H1 (cell line): ENCODE measurements at regions of chr3 and their contacts with region 1.

Region 1: DNA sequence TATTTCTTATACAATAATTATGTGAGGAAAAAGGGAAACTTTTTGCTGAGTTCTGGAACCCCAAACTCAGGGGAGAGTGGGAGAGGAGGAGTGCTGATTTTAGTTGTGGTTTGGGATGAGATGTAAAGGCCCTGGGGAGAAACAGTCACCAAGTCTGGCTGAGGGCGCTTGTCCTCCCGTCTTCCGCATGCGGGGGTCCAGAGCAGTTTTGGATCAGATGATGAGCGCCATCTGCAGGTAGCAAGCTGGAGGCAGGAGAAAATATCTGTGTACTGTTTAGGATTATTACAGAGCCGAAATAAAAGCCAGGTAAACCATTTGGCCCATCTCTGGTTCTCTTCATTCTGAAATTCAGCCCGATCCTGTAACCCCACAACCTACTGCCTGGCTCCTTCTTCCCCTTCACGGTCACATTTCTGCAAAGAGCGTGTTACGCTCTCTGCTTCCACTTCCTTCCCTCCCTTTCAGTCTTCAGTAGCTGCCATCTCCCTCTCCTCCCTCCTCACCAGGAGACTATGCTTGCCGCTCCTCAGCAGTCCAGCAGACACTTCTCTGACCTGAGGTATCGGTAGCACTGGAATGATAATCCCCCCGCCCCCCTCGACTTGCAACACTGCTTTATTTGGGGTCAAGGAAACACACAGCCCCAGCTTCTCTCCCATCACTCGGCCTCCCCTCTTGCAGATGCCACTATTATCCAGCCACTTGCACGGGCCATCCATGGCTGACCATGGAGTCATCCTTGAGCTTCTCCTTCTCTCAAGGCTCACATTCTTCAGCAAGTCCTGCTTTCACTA is 1.4 kb upstream of the PARP14 start:
- DNase-seq: peak; percentile 25 to 82
- H3K4me3 ChIP-seq: peak overlapping the region in 1 of 4 experiments; percentile 87; a peak in 2 of 8 replicates
- H3K27ac ChIP-seq: no peak overlapping the region
- H3K4me1 ChIP-seq: peaks cover 6 to 12% (median 9%) of the 10 kb centered on the region in 4 experiments; a peak in 6 of 7 replicates
- H3K27me3 ChIP-seq: no peaks in the 10 kb centered on the region; a peak in 2 of 7 replicates
- CTCF ChIP-seq: peak; percentile 68 to 90 (median 84)
- EP300 ChIP-seq: no peak
- POLR2A ChIP-seq: no peak
- RAD21 ChIP-seq: peak; percentile 90 to 93

Region 2: DNA sequence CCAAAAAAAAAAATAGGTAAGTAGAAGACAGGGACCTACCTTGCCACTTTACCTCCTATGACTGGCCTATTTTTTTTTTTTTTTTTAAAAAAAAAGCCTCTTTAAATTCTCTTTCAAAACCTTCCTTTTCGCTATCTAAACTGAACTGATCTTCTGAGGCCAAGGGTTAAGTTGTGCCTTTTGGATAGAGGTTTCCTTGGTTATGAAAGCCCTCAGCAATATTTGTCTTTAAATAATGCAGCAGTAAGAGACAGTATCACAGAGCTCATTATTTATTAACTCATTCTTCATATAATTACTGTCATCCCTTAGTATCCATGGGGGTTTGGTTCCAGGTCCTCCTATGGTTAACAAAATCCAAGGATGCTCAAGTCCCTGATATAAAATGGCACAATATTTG is 305.2 kb before region 1 on chr3:
- CTCF ChIA-PET with region 1: no interaction called
- POLR2A ChIA-PET with region 1: no interaction called
- DNase-seq: no peak
- H3K4me3 ChIP-seq: no peak overlapping the region
- H3K27ac ChIP-seq: no peak overlapping the region
- H3K4me1 ChIP-seq: no peaks in the 10 kb centered on the region
- H3K27me3 ChIP-seq: no peaks in the 10 kb centered on the region
- CTCF ChIP-seq: no peak
- EP300 ChIP-seq: no peak
- POLR2A ChIP-seq: no peak
- RAD21 ChIP-seq: no peak

Region 3: DNA sequence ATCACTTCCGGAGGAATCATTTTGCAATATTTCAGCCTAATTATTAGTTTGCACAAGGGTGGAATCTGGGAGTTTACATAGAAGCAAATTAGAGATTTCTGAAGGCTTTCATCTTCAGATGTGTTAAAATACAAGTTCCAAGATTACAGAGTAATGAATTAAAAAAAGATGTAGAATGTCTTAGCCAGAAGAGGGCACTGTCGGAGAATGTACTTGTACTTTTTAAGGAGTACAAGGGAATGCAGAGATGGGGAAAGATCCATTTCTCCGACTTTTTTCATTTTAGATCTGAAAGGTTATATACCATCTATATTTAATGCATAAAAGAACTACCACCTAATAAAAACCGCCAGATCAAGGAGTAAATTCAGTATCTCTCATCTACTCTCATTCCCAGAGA is 220.3 kb before region 1 on chr3:
- CTCF ChIA-PET with region 1: interaction called, 18 read pairs
- POLR2A ChIA-PET with region 1: no interaction called
- DNase-seq: no peak
- H3K4me3 ChIP-seq: no peak overlapping the region
- H3K27ac ChIP-seq: no peak overlapping the region
- H3K4me1 ChIP-seq: no peaks in the 10 kb centered on the region
- H3K27me3 ChIP-seq: no peaks in the 10 kb centered on the region
- CTCF ChIP-seq: peak in 2 of 3 experiments; percentile 8 to 33; a peak in 2 of 4 replicates
- EP300 ChIP-seq: no peak
- POLR2A ChIP-seq: no peak
- RAD21 ChIP-seq: peak; percentile 58 to 61

Region 4: GRCh38 chr3:122619040-122619439 is 60.2 kb before region 1 on chr3:
- CTCF ChIA-PET with region 1: interaction called, 12 read pairs
- POLR2A ChIA-PET with region 1: no interaction called
- DNase-seq: no peak
- H3K4me3 ChIP-seq: no peak overlapping the region
- H3K27ac ChIP-seq: no peak overlapping the region
- H3K4me1 ChIP-seq: peaks cover 0 to 5% (median 3%) of the 10 kb centered on the region in 4 experiments; a peak in 2 of 7 replicates
- H3K27me3 ChIP-seq: no peaks in the 10 kb centered on the region
- CTCF ChIP-seq: no peak
- EP300 ChIP-seq: no peak
- POLR2A ChIP-seq: no peak
- RAD21 ChIP-seq: no peak

Region 5: GRCh38 chr3:122661633-122662032 is 17.6 kb before region 1 on chr3:
- CTCF ChIA-PET with region 1: interaction called, 16 read pairs
- POLR2A ChIA-PET with region 1: no interaction called
- DNase-seq: no peak
- H3K4me3 ChIP-seq: no peak overlapping the region
- H3K27ac ChIP-seq: no peak overlapping the region
- H3K4me1 ChIP-seq: no peaks in the 10 kb centered on the region
- H3K27me3 ChIP-seq: no peaks in the 10 kb centered on the region
- CTCF ChIP-seq: no peak
- EP300 ChIP-seq: no peak
- POLR2A ChIP-seq: no peak
- RAD21 ChIP-seq: no peak

Region 6: DNA sequence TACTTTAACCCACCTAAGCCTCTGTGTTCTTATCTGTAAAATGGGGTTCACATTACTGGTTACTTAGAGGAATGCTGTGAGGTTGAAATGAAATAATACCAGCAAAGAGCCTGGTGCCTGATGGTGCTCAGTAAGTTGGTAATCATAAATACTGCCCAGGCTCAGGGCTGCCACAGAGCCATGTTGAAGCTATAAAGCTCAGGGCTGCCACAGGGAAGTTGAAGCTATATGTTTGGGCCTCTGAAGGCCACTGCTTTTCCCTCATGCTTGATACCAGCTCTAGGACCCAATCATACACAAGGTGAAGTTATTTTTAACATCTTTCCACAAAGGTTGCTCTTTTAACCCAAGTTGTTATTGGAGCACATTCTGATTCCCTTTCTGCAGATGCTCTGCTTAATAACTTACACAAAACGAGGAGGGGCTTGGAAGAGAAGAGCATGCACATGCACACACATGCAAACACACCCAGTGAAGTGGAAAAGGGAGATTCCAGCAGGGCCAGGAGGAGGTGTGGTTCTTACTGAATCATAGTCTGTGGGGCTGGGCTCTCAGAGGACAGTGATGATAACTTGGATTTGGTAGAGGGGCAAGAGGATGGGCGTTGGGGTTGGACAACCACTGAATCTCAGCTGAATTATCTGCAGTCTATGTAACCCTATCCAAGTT is 18.8 kb after region 1 on chr3:
- CTCF ChIA-PET with region 1: interaction called, 13 read pairs
- POLR2A ChIA-PET with region 1: interaction called, 3 read pairs
- DNase-seq: no peak
- H3K4me3 ChIP-seq: no peak overlapping the region
- H3K27ac ChIP-seq: no peak overlapping the region
- H3K4me1 ChIP-seq: no peaks in the 10 kb centered on the region
- H3K27me3 ChIP-seq: no peaks in the 10 kb centered on the region
- CTCF ChIP-seq: no peak
- EP300 ChIP-seq: no peak
- POLR2A ChIP-seq: no peak
- RAD21 ChIP-seq: no peak